Left colon (tissue), 2 donors: ENCODE measurements at regions of chr15 and their contacts with region 1.

Region 1: DNA sequence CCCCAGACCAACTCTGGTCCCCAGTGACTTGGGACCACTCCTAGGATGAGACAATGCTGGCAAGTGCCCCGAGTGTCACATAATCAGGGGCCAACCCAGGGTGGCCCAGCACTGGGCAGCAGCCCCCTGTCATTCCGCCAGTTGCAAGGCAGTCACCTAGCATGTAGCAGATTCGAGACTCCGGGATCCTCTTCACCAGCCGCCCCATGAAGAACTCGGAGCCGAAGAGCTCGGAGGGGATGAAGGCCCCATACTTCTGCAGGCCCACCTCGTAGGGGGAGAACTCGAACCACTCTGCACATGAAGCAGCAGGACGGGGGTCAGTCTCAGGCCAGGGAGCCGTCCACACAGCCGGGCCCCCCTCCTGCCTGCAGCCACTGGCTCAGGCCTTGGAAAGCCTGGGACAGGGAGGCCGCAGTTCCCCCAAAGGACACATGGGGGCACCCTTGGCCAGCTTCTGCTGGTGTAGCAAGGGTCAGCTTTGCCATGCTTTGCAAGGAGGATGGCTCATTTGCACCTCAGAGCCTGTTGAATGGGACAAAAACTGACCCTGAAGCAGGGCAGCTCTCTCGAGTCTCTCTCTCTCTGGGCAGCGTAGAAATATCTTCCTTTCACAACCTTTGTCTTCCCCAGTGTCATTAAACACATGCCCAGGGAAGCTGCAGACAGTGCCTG is 17.0 kb upstream of the EHD4 start:
- DNase-seq: peak; percentile 61 to 88
- ATAC-seq: peak; percentile 95

Region 2: DNA sequence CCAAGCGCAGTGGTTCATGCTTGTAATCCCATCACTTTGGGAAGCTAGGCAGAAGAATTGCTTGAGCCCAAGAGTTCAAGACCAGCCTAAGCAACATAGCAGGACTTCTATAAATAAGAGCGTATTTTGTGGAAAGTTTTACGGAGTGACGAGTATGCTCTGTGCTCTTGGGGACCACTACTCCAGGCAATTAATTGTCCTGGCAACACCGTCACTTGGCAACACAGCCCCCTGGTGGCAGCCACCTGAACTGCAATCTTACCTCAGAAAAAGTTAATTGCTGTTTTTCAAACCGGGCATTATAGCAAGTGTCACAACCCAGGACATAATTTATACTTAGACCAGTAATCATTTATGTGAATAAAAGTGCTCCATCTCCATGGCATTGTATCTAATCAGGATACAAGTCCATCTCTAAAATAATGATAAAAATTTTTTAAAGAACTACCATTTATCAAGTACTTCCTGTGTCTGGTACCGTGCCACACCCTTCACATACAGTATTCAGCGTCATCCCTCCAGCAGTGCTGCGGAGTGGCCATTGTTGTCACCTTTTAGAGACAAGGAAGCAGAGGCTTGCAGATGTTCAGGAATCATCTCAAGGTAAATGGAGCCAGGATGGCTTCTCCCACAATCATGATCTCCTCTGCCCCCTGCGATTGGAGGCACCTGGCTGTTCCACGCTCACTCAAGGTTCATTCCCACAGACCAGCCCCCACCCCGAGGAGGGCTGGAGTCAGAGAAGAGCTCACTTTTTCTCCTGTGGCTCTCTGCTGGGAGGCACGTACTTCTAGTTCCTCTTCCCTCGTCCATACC is 70.5 kb after region 1 on chr15:
- intact Hi-C with region 1: loop called in 1 of 2 experiments (anchors 10 kb)
- DNase-seq: peak in 1 of 2 donors; percentile 77
- ATAC-seq: peak; percentile 12

Region 3: GRCh38 chr15:42137431-42138261 is 148.2 kb after region 1 on chr15:
- intact Hi-C with region 1: loop called in 1 of 2 experiments (anchors 10 kb)
- DNase-seq: peak in 1 of 2 donors; percentile 20
- ATAC-seq: no peak

Region 4: DNA sequence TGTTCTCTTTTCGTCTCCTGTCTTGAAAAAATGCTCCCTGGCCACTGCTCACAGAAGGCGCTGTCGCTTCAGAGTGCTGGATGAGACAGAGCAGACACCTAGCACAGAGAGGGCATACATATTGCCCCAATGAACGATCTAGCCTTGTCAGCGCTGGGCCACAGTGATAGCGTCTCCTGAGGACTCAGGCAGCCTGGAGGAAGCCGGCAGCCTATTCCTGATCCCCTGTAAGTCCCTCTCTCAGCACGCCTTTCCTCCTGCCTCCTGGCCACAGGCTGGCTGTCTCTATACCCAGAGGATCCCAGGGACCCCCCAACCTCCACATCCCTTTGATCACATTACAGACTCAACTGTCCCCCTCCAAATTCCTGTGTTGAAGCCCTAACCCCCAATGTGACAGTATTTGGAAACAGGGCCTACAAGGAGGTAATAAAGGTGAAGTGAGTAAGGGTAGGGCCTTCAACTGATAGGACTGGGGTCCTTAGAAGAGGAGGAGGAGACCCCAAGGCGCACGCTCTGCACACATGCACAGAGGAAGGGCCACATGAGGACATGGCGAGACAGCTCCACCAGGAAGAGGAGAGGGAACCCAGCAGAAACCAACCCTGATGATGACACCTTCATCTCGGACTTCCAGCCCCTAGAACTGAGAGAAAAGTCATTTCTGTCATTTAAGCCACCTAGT is 159.6 kb after region 1 on chr15:
- intact Hi-C with region 1: no loop called
- DNase-seq: no peak
- ATAC-seq: no peak